ENCODE measurements at regions of chr12 and their contacts with region 1.

Region 1: GRCh38 chr12:39199351-39199750 is 243.6 kb downstream of the KIF21A start:
- DNase-seq: no peak
- ATAC-seq: no peak
- H3K4me3 ChIP-seq: no peak overlapping the region
- H3K27ac ChIP-seq: no peak overlapping the region
- H3K4me1 ChIP-seq: no peaks in the 10 kb centered on the region
- H3K27me3 ChIP-seq: no peaks in the 10 kb centered on the region
- CTCF ChIP-seq: no peak
- EP300 ChIP-seq: no peak
- POLR2A ChIP-seq: no peak
- RAD21 ChIP-seq: no peak

Region 2: GRCh38 chr12:39267886-39268285 is 68.5 kb after region 1 on chr12:
- CTCF ChIA-PET with region 1: no interaction called
- POLR2A ChIA-PET with region 1: no interaction called
- in situ Hi-C with region 1: no loop called
- intact Hi-C with region 1: loop called (anchors 10 kb)
- DNase-seq: no peak
- ATAC-seq: no peak
- H3K4me3 ChIP-seq: no peak overlapping the region
- H3K27ac ChIP-seq: no peak overlapping the region
- H3K4me1 ChIP-seq: no peaks in the 10 kb centered on the region
- H3K27me3 ChIP-seq: no peaks in the 10 kb centered on the region; a peak in 1 of 5 replicates
- CTCF ChIP-seq: no peak
- EP300 ChIP-seq: no peak
- POLR2A ChIP-seq: no peak
- RAD21 ChIP-seq: no peak